B cell (primary cell): ENCODE measurements at regions of chr10 and their contacts with region 1.

Region 1: GRCh38 chr10:113563306-113564088 is 10.6 kb downstream of the HABP2 start:
- DNase-seq: peak; percentile 62
- ATAC-seq: peak; percentile 72
- H3K4me3 ChIP-seq: peak overlapping the region in 4 of 5 experiments; percentile 9 to 37 (median 24)
- H3K4me3 Mint-ChIP-seq: peak overlapping the region; percentile 73
- H3K27ac ChIP-seq: no peak overlapping the region
- H3K27ac Mint-ChIP-seq: no peak overlapping the region
- H3K4me1 ChIP-seq: peaks cover 2 to 7% of the 10 kb centered on the region in 2 donors
- H3K4me1 Mint-ChIP-seq: peaks cover 5% of the 10 kb centered on the region
- H3K27me3 ChIP-seq: peaks cover 0 to 2% (median 0%) of the 10 kb centered on the region in 4 experiments
- H3K27me3 Mint-ChIP-seq: peaks cover 12% of the 10 kb centered on the region
- CTCF ChIP-seq: peak; percentile 94

Region 2: GRCh38 chr10:112721080-112721698 is 842.3 kb before region 1 on chr10:
- CTCF ChIA-PET with region 1: interaction called, 4 read pairs
- POLR2A ChIA-PET with region 1: no interaction called
- intact Hi-C with region 1: loop called (anchors 5 kb)
- DNase-seq: peak; percentile 24
- ATAC-seq: peak; percentile 31
- H3K4me3 ChIP-seq: no peak overlapping the region
- H3K4me3 Mint-ChIP-seq: no peak overlapping the region
- H3K27ac ChIP-seq: no peak overlapping the region
- H3K27ac Mint-ChIP-seq: no peak overlapping the region
- H3K4me1 ChIP-seq: no peaks in the 10 kb centered on the region
- H3K4me1 Mint-ChIP-seq: no peaks in the 10 kb centered on the region
- H3K27me3 ChIP-seq: no peaks in the 10 kb centered on the region
- H3K27me3 Mint-ChIP-seq: no peaks in the 10 kb centered on the region
- CTCF ChIP-seq: peak; percentile 62

Region 3: DNA sequence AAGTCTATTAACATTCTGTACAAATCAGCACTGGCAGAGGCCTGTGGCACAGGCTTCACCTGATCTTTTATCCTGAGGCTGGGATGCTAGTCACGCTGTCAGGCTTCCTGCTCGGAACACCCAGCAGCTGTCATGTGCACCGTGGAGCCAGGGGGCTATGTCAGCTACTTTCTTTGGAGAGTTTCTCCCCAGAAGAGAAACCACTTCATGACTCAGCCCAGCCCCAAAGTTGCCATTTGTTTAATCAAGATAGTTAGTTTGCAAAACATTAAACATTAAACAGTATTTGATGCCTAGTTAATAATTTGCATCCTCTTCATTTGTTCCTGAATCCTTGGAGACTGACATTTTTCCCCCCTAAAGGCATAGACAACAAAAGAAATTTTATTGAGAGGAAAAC is 10.8 kb before region 1 on chr10 and contains the start of gene HABP2:
- CTCF ChIA-PET with region 1: interaction called, 12 read pairs
- POLR2A ChIA-PET with region 1: no interaction called
- intact Hi-C with region 1: no loop called
- DNase-seq: no peak
- ATAC-seq: no peak
- H3K4me3 ChIP-seq: no peak within 1 kb of the TSS
- H3K4me3 Mint-ChIP-seq: no peak within 1 kb of the TSS
- H3K27ac ChIP-seq: no peak within 1 kb of the TSS
- H3K27ac Mint-ChIP-seq: no peak within 1 kb of the TSS
- H3K4me1 ChIP-seq: no peaks in the 10 kb centered on the region
- H3K4me1 Mint-ChIP-seq: no peaks in the 10 kb centered on the region
- H3K27me3 ChIP-seq: peaks cover 0 to 6% (median under 1%) of the 10 kb centered on the region in 4 experiments
- H3K27me3 Mint-ChIP-seq: peaks cover 15% of the 10 kb centered on the region
- CTCF ChIP-seq: no peak
- total RNA-seq, gene HABP2: 0.10 TPM in 1 of 2 replicates, not detected in the other